ENCODE measurements at regions of chr12 and their contacts with region 1.

Region 1: GRCh38 chr12:21451529-21451928 is 14.1 kb downstream of the PYROXD1 start:
- DNase-seq: no peak
- H3K4me3 Mint-ChIP-seq: no peak overlapping the region
- H3K27ac Mint-ChIP-seq: no peak overlapping the region
- H3K4me1 Mint-ChIP-seq: peaks cover 26% of the 10 kb centered on the region
- H3K27me3 Mint-ChIP-seq: no peaks in the 10 kb centered on the region

Region 2: GRCh38 chr12:21308785-21309184 is 142.7 kb before region 1 on chr12:
- CTCF ChIA-PET with region 1: interaction called, 3 read pairs
- intact Hi-C with region 1: loop called (anchors 5 kb)
- DNase-seq: no peak
- H3K4me3 Mint-ChIP-seq: no peak overlapping the region
- H3K27ac Mint-ChIP-seq: no peak overlapping the region
- H3K4me1 Mint-ChIP-seq: no peaks in the 10 kb centered on the region
- H3K27me3 Mint-ChIP-seq: peaks cover 2% of the 10 kb centered on the region

Region 3: DNA sequence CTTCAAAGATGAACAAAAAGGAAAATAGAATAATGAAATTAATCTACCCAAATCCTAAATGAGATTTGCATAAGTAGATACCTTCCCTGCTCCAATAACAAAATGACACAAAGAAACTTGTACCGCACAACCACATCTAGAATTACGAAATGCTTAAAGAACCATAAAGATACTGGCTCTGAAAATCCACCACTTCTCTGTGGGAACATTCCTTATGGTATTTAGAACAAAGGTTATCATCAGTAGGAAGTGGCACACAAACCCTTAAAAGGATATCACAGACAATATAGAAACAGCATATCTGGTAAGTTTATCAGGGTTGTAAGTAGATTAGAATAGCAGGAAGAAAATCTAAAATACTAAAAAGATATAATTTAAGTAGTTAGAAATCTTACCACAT is 67.3 kb before region 1 on chr12:
- CTCF ChIA-PET with region 1: no interaction called
- intact Hi-C with region 1: no loop called
- DNase-seq: no peak
- H3K4me3 Mint-ChIP-seq: no peak overlapping the region
- H3K27ac Mint-ChIP-seq: no peak overlapping the region
- H3K4me1 Mint-ChIP-seq: no peaks in the 10 kb centered on the region
- H3K27me3 Mint-ChIP-seq: no peaks in the 10 kb centered on the region

Region 4: DNA sequence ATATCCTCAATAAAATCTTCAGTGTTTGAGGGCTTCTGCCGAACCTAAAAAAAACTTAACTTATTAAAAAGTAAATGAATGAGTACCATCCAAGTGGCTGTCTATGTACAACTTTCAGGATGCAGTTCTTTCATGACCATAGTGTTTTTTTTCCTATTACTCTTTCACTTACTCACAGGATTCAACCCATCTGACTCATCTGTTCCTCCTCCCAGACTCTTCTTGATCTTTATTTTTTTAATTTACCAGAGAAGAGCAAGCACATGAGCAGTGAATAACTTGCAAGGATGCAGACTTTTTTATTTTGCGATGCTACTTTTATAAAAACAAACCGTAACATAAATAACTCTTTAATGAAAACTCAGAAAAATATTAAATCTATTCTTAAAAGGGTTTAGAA is 25.4 kb after region 1 on chr12:
- CTCF ChIA-PET with region 1: no interaction called
- intact Hi-C with region 1: loop called (anchors 1 kb)
- DNase-seq: no peak
- H3K4me3 Mint-ChIP-seq: no peak overlapping the region
- H3K27ac Mint-ChIP-seq: peak overlapping the region; percentile 50
- H3K4me1 Mint-ChIP-seq: peaks cover 16% of the 10 kb centered on the region
- H3K27me3 Mint-ChIP-seq: no peaks in the 10 kb centered on the region

Region 5: GRCh38 chr12:21527451-21528180 is 76.1 kb after region 1 on chr12:
- CTCF ChIA-PET with region 1: no interaction called
- intact Hi-C with region 1: no loop called
- DNase-seq: peak; percentile 74
- H3K4me3 Mint-ChIP-seq: peak overlapping the region; percentile 59
- H3K27ac Mint-ChIP-seq: no peak overlapping the region
- H3K4me1 Mint-ChIP-seq: peaks cover 2% of the 10 kb centered on the region
- H3K27me3 Mint-ChIP-seq: peaks cover 20% of the 10 kb centered on the region

Region 6: DNA sequence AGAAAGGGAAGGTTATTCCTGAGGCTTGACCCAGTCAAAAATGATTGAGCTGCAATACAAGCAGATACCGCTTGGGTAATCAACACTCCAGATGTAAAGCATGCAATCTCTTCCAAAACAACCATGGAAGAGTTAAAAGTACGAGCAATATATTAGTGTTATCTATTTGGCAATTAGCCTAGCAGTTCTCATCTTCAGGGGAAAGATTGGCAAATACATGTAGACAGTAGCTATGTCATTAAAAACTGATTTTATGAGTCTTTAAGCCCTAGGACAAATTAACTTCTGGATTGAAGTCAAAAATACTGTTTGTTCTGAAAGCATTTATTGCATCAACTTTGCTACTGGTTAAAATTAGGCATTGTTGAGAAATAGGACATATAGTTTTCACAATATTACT is 162.4 kb after region 1 on chr12:
- CTCF ChIA-PET with region 1: no interaction called
- intact Hi-C with region 1: loop called (anchors 1 kb)
- DNase-seq: no peak
- H3K4me3 Mint-ChIP-seq: no peak overlapping the region
- H3K27ac Mint-ChIP-seq: peak overlapping the region; percentile 85
- H3K4me1 Mint-ChIP-seq: peaks cover 49% of the 10 kb centered on the region
- H3K27me3 Mint-ChIP-seq: no peaks in the 10 kb centered on the region

Region 7: GRCh38 chr12:22505826-22506225 is 1054.3 kb after region 1 on chr12:
- CTCF ChIA-PET with region 1: no interaction called
- intact Hi-C with region 1: no loop called
- DNase-seq: no peak
- H3K4me3 Mint-ChIP-seq: no peak overlapping the region
- H3K27ac Mint-ChIP-seq: no peak overlapping the region
- H3K4me1 Mint-ChIP-seq: no peaks in the 10 kb centered on the region
- H3K27me3 Mint-ChIP-seq: no peaks in the 10 kb centered on the region

Measured in activated naive CD4-positive, alpha-beta T cell treated with anti-CD3 and anti-CD28 coated beads for 36 hours (primary cell).